ENCODE measurements at regions of chr3 and their contacts with region 1.

Region 1: DNA sequence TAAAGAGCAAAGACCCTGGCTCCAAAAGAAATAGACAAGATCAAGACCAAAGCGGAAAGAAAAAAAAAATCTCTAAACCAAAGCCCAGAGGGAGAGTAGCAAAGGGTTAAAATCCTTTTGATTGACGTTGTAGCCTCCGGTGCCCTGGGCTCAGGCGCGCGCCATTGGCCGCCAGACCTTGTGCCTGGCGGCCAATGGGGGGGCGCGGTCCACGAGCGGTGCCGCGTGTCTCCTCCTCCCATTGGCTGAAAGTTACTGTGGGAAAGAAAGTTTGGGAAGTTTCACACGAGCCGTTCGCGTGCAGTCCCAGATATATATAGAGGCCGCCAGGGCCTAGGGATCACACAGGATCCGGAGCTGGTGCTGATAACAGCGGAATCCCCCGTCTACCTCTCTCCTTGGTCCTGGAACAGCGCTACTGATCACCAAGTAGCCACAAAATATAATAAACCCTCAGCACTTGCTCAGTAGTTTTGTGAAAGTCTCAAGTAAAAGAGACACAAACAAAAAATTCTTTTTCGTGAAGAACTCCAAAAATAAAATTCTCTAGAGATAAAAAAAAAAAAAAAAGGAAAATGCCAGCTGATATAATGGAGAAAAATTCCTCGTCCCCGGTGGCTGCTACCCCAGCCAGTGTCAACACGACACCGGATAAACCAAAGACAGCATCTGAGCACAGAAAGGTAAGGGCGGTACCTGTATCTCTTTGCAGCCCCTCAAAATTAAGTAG is at the start of gene HES1:
- DNase-seq: peak in 13 of 35 experiments; percentile 10 to 63 (median 28)
- ATAC-seq: peak in 1 of 4 experiments; percentile 34
- H3K4me3 ChIP-seq: peak within 1 kb of the TSS; percentile 52 to 87
- H3K4me3 Mint-ChIP-seq: peak within 1 kb of the TSS; percentile 80 to 91 (median 84)
- H3K27ac ChIP-seq: no peak within 1 kb of the TSS
- H3K27ac Mint-ChIP-seq: peak within 1 kb of the TSS; percentile 39 to 74
- H3K4me1 ChIP-seq: peaks cover 37 to 57% of the 10 kb centered on the region in 2 experiments
- H3K4me1 Mint-ChIP-seq: peaks cover 45 to 60% (median 51%) of the 10 kb centered on the region in 3 donors
- H3K27me3 ChIP-seq: peaks cover 2 to 74% of the 10 kb centered on the region in 2 experiments
- H3K27me3 Mint-ChIP-seq: peaks cover 29 to 65% of the 10 kb centered on the region in 2 donors
- total RNA-seq, gene HES1: 0.35 to 1.1 (median 0.46) TPM

Region 2: DNA sequence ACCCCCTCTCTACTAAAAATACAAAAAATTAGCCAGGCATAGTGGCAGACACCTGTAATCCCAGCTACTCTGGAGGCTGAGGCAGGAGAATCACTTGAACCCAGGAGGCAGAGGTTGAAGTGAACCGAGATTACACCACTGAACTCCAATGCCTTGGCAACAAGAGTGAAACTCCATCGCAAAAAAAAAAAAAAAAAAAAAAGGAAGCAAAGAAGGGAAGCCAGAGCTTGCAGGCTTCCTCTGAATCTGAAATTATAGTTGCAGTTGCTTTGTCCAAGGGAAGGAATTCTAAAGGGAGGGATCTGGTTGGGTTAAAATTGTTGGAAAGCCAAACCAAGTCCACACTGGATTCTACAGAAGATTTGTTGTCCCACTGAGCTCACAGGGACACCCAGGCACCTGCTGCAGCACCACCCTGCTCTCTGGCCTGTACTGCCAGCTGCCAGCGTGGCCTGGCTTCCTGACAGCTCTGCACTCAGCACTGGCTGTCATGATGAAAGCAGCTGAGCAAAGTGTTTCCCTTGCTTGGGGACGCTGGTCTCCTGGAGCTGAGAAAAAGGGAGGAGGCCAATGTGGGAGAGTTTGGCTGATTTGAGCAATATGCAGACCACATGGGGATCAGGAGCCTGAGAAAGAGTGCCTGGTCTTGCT is 88.9 kb before region 1 on chr3:
- CTCF ChIA-PET with region 1: no interaction called
- POLR2A ChIA-PET with region 1: interaction called in 1 of 2 experiments, 12 read pairs
- DNase-seq: peak in 1 of 35 experiments; percentile 6
- ATAC-seq: no peak
- H3K4me3 ChIP-seq: no peak overlapping the region
- H3K4me3 Mint-ChIP-seq: no peak overlapping the region
- H3K27ac ChIP-seq: no peak overlapping the region
- H3K27ac Mint-ChIP-seq: no peak overlapping the region
- H3K4me1 ChIP-seq: no peaks in the 10 kb centered on the region
- H3K4me1 Mint-ChIP-seq: peaks cover 0 to 3% (median 0%) of the 10 kb centered on the region in 3 donors
- H3K27me3 ChIP-seq: peaks cover 0 to 7% of the 10 kb centered on the region in 2 experiments
- H3K27me3 Mint-ChIP-seq: peaks cover 0 to 4% of the 10 kb centered on the region in 2 donors

Region 3: DNA sequence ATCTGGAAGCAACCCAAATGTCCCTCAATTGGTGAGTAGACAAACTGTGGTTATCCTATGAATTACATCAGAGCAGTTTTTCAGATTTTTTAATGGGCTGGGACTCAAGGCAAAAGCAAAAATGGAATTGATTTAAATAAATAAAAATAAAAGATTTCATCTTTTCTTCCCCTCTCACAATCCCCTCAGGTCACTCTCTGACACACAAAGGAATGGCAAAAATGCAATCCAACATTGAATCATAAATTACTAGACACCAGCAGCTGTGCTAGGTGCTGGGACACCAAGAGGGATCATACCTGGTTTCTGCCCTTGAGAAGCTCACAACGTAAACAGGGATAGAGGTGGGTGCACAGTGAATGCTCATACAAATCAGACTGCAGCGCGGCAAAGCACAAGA is 156.4 kb after region 1 on chr3:
- CTCF ChIA-PET with region 1: interaction called in 1 of 2 experiments, 10 read pairs
- POLR2A ChIA-PET with region 1: no interaction called
- DNase-seq: no peak
- ATAC-seq: no peak
- H3K4me3 ChIP-seq: no peak overlapping the region
- H3K4me3 Mint-ChIP-seq: no peak overlapping the region
- H3K27ac ChIP-seq: no peak overlapping the region
- H3K27ac Mint-ChIP-seq: no peak overlapping the region
- H3K4me1 ChIP-seq: peaks cover 0 to 2% of the 10 kb centered on the region in 2 experiments
- H3K4me1 Mint-ChIP-seq: peaks cover 0 to 3% (median 0%) of the 10 kb centered on the region in 3 donors
- H3K27me3 ChIP-seq: peaks cover 0 to 18% of the 10 kb centered on the region in 2 experiments
- H3K27me3 Mint-ChIP-seq: peaks cover 6 to 24% of the 10 kb centered on the region in 2 donors